ENCODE measurements at regions of chr9 and their contacts with region 1.

Region 1: GRCh38 chr9:94657021-94657725 is 17.9 kb upstream of the FBP1 start:
- DNase-seq: no peak
- H3K4me3 Mint-ChIP-seq: no peak overlapping the region
- H3K27ac Mint-ChIP-seq: no peak overlapping the region
- H3K4me1 Mint-ChIP-seq: peaks cover 31% of the 10 kb centered on the region
- H3K27me3 Mint-ChIP-seq: peaks cover 1% of the 10 kb centered on the region

Region 2: GRCh38 chr9:94668418-94668932 is 11.3 kb after region 1 on chr9:
- CTCF ChIA-PET with region 1: interaction called, 16 read pairs
- POLR2A ChIA-PET with region 1: no interaction called
- DNase-seq: no peak
- H3K4me3 Mint-ChIP-seq: no peak overlapping the region
- H3K27ac Mint-ChIP-seq: no peak overlapping the region
- H3K4me1 Mint-ChIP-seq: peaks cover 16% of the 10 kb centered on the region
- H3K27me3 Mint-ChIP-seq: peaks cover 17% of the 10 kb centered on the region

Measured in activated CD4-positive, alpha-beta T cell treated with anti-CD3 and anti-CD28 coated beads, Interleukin-2, amount 10 ng/mL, durations not matched to agents 7 days and 5 days (primary cell).